K562 (cell line): ENCODE measurements at regions of chr17 and their contacts with region 1.

Region 1: DNA sequence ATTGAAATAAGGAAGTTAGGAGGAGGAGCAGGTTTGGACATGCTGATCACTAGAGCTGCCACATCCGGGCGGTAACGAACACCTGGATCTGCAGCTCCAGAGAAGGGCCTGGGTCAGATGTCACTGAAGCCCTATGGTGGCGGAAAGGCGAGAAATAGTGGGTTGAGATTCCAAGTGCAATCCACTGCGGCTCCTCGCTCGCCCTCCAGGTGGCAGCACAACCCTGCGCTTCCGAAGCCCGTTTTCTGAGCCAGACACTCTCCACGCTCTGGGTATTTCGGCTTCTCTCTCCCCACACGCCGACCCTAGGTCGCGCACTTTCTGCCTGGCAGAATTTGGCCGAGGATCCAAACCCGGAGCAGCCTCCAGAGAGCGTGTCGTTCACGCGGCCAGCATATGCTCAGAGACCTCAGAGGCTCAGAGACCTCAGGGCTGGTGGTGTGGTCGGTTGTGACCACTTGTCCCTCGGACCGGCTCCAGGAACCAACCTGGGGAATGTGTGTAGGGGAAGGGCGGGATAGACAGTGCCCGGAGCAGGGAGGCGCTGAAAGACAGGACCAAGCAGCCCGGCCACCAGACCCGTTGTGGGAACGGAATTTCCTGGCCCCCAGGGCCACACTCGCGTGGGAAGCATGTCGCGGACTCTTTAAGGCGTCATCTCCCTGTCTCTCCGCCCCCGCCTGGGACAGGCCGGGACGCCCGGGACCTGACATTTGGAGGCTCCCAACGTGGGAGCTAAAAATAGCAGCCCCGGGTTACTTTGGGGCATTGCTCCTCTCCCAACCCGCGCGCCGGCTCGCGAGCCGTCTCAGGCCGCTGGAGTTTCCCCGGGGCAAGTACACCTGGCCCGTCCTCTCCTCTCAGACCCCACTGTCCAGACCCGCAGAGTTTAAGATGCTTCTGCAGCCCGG is 744 bp upstream of the SLC2A4 start:
- DNase-seq: peak; percentile 68 to 88 (median 74)
- ATAC-seq: peak; percentile 83
- H3K4me3 ChIP-seq: peak overlapping the region; percentile 65
- H3K27ac ChIP-seq: peak overlapping the region; percentile 74
- H3K4me1 ChIP-seq: peaks cover 15 to 43% of the 10 kb centered on the region in 2 experiments; a peak in 4 of 5 replicates
- H3K27me3 ChIP-seq: no peaks in the 10 kb centered on the region
- CTCF ChIP-seq: peak; percentile 93 to 95 (median 95)
- EP300 ChIP-seq: no peak
- POLR2A ChIP-seq: peak; percentile 44; the same call in 1 of the 2 replicates
- RAD21 ChIP-seq: peak; percentile 87 to 94

Region 2: DNA sequence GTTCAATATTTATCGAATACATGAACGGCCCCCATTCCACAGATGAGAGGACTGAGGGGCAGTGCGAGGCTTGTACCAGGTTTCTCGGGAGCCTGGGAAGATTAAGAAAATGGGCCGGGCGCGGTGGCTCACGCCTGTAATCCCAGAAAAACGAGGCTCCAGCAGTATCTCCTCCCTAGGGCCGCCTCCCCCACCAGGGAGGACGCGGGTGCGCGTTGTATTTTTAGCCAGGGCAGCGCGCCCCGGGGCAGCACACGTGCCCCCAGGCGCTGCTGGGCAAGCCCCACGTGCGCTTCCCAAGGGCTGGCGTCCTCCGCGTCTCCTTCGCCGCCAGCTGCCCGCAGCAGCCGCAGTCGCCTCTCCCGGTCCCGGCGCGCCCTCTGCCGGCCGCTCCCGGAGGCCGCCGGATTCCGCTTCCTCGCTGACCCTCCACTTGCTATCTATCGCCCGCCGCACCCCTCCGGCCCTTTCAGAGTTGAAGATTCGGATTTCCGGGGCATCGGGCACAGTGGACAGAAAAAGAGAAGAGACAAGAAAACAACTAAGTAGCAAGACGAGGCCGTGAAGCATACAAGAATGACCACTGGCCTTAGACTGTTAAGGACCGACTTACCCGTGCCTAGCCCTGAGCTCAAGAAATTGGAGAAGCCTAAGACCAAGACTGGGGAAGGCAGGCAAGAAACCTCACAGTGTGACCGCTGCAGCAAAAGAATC is 15.6 kb after region 1 on chr17:
- CTCF ChIA-PET with region 1: interaction called, 19 read pairs
- POLR2A ChIA-PET with region 1: interaction called, 13 read pairs
- in situ Hi-C with region 1: no loop called
- intact Hi-C with region 1: loop called (anchors 1 kb)
- DNase-seq: peak; percentile 74 to 83 (median 76)
- ATAC-seq: peak; percentile 90
- H3K4me3 ChIP-seq: no peak overlapping the region
- H3K27ac ChIP-seq: no peak overlapping the region
- H3K4me1 ChIP-seq: peaks cover 17 to 42% of the 10 kb centered on the region in 2 experiments
- H3K27me3 ChIP-seq: no peaks in the 10 kb centered on the region
- CTCF ChIP-seq: peak; percentile 78 to 90 (median 81)
- EP300 ChIP-seq: no peak
- POLR2A ChIP-seq: no peak
- RAD21 ChIP-seq: peak; percentile 88 to 93

Region 3: DNA sequence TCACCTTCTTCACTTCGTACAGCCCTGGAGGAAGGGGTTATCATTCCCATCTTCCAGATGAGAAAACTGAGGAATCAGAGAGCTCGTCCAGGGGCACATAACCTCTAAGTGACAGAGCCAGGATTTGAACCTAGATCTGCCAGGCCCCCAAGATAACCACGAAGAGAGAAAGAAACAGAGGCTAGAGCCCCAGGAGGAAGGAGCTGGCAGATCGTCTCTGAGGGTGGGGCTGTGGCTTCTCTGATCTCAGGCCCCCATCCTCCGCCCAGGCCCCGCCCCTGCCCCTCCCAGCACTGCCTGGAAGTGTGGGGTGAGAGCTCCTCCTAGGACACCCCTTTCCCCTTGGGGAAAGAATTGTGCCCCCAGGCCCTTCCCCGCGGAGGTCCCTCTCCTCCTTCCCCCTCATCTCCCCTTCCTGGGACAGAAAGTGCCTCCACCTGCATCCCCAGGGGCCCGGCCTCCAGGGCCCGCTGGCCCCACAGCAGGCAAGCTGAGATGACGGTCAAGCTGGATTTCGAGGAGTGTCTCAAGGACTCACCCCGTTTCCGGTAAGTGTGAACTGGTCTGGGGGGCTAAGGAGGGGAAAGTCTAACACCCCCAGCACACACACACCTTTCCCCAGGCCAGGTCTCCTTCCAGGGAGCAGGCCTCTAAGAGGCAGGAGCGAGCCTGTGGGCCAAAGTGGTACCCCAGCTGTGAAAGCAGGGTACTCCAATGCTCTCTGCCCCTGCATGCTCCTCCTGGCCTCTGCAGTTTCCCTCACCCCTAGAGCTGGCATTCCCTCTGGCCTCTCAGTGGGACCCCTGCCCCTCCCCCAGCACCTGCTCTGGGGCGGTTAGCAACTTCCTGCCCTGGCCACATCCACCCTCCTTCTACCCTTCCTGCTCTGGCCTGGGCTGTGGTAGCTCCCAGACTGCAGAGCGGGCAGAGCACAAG is 55.7 kb after region 1 on chr17 and contains the start of gene ACAP1:
- CTCF ChIA-PET with region 1: no interaction called
- POLR2A ChIA-PET with region 1: interaction called, 4 read pairs
- in situ Hi-C with region 1: loop called (anchors 5 kb)
- intact Hi-C with region 1: no loop called
- DNase-seq: peak; percentile 44 to 68 (median 50)
- ATAC-seq: peak; percentile 93
- H3K4me3 ChIP-seq: 0 out of 2 replicates have a peak within 1 kb of the TSS, but pooled peaks have one; percentile 15
- H3K27ac ChIP-seq: peak within 1 kb of the TSS; percentile 30; the same call in 1 of the 3 replicates
- H3K4me1 ChIP-seq: peaks cover 11 to 28% of the 10 kb centered on the region in 2 experiments
- H3K27me3 ChIP-seq: no peaks in the 10 kb centered on the region
- CTCF ChIP-seq: no peak; a peak in 1 of 6 replicates
- EP300 ChIP-seq: no peak
- POLR2A ChIP-seq: no peak
- RAD21 ChIP-seq: no peak
- polyA plus RNA-seq, gene ACAP1: 0.15 to 0.38 TPM

Region 4: GRCh38 chr17:7344399-7344798 is 63.6 kb after region 1 on chr17:
- CTCF ChIA-PET with region 1: interaction called, 32 read pairs
- POLR2A ChIA-PET with region 1: no interaction called
- in situ Hi-C with region 1: loop called (anchors 5 kb)
- intact Hi-C with region 1: loop called (anchors 2 kb)
- DNase-seq: no peak
- ATAC-seq: no peak
- H3K4me3 ChIP-seq: no peak overlapping the region
- H3K27ac ChIP-seq: no peak overlapping the region
- H3K4me1 ChIP-seq: peaks cover 0 to 29% of the 10 kb centered on the region in 2 experiments; a peak in 3 of 5 replicates
- H3K27me3 ChIP-seq: no peaks in the 10 kb centered on the region
- CTCF ChIP-seq: no peak
- EP300 ChIP-seq: no peak
- POLR2A ChIP-seq: no peak
- RAD21 ChIP-seq: no peak

Region 5: DNA sequence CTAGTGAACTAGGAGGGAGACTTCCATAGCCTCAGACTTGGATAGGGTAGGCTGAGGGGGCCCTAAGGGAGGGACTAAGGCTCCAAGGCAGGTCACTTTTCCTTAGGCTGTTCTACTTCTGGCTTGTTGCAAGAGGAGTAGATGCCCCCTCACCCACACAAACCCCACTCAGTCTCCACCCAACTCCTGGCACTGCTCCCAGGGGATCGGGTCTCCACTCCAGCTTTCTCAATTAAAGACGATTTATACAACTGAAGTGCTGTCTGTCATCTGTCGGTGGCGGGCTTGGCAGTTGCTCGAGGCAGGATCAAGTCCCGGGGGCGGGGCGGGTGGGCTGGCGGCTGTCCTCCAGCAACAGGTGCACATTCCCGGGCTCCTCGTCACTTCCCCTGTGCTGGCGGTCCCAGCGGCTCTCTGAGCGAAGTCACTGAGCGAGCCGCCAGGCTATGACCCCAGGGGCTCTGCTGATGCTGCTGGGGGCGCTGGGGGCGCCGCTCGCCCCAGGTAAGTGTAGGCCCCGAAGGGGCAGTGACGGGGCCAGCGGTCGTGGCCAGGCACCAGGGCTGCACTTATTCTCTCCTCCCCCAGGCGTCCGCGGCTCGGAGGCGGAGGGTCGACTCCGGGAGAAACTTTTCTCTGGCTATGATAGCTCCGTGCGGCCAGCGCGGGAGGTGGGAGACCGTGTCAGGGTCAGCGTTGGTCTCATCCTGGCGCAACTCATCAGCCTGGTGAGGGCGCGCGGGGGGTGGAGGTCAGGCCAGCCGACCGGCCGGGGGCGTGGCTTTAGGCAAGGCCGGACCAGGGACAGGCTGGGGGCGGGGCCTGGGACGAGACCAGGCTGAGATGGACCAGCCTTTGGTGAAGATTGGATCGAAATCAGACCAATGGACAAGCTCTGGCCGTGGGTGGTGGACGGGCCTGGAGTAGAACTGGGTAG is 164.2 kb after region 1 on chr17 and contains the start of gene CHRNB1:
- CTCF ChIA-PET with region 1: no interaction called
- POLR2A ChIA-PET with region 1: no interaction called
- in situ Hi-C with region 1: no loop called
- intact Hi-C with region 1: no loop called
- DNase-seq: peak; percentile 88 to 90 (median 90)
- ATAC-seq: peak; percentile 94
- H3K4me3 ChIP-seq: peak within 1 kb of the TSS; percentile 35
- H3K27ac ChIP-seq: peak within 1 kb of the TSS; percentile 30; the same call in 2 of the 3 replicates
- H3K4me1 ChIP-seq: peaks cover 15 to 46% of the 10 kb centered on the region in 2 experiments; a peak in 4 of 5 replicates
- H3K27me3 ChIP-seq: no peaks in the 10 kb centered on the region
- CTCF ChIP-seq: peak in 2 of 3 experiments; percentile 10 to 16; a peak in 1 of 6 replicates
- EP300 ChIP-seq: no peak
- POLR2A ChIP-seq: no peak
- RAD21 ChIP-seq: peak in 1 of 2 experiments; percentile 15; a peak in 1 of 4 replicates
- polyA plus RNA-seq, gene CHRNB1: 8.2 to 11.3 TPM